ENCODE measurements at regions of chr6 and their contacts with region 1.

Region 1: GRCh38 chr6:107716688-107717089 is 107.4 kb downstream of the SCML4 start:
- DNase-seq: peak; percentile 84
- ATAC-seq: peak; percentile 62
- H3K4me3 Mint-ChIP-seq: peak overlapping the region; percentile 53
- H3K27ac Mint-ChIP-seq: peak overlapping the region; percentile 90
- H3K4me1 Mint-ChIP-seq: peaks cover 72% of the 10 kb centered on the region
- H3K27me3 Mint-ChIP-seq: no peaks in the 10 kb centered on the region

Region 2: DNA sequence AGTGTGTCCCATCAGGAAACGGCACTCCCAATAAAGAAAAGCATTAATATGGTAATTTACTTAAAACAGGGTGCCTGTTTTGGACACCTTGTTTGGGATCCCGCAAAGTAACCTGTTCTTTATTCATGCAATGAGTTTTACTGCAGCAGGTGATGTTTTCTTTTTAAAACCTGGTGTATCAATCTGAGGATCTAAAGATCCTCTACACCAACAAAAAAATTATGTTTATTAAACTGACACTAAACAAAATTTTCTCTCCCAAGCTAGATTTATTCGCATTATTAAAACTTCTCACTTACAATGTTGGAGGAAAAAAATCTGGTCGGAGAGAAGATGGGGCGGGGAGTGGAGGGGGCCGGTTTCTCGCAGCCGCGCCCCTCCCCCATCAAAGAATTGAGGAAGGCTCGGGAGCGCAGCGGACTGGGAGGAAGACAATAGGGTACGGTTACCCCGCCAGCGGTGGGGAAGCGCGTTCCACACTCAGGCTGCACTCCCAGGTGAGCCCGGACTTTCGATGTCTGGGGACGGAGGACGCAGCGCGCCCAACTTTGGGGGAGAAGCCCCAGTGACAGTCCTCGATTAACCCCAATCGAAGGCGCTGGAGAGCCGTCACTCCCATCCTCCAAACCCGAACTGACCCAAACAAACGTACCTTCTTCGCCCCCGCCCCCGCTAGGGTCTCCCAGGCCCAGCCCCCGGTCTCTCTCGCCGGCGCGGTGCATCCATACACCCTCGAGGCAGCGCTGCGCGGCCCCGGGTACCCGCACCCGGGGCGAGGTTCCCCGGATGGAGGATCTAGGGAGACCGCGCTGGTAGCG is 743.5 kb before region 1 on chr6:
- CTCF ChIA-PET with region 1: no interaction called
- POLR2A ChIA-PET with region 1: no interaction called
- intact Hi-C with region 1: no loop called
- DNase-seq: peak; percentile 30
- ATAC-seq: no peak
- H3K4me3 Mint-ChIP-seq: peak overlapping the region; percentile 44
- H3K27ac Mint-ChIP-seq: no peak overlapping the region
- H3K4me1 Mint-ChIP-seq: peaks cover 11% of the 10 kb centered on the region
- H3K27me3 Mint-ChIP-seq: peaks cover 50% of the 10 kb centered on the region

Region 3: DNA sequence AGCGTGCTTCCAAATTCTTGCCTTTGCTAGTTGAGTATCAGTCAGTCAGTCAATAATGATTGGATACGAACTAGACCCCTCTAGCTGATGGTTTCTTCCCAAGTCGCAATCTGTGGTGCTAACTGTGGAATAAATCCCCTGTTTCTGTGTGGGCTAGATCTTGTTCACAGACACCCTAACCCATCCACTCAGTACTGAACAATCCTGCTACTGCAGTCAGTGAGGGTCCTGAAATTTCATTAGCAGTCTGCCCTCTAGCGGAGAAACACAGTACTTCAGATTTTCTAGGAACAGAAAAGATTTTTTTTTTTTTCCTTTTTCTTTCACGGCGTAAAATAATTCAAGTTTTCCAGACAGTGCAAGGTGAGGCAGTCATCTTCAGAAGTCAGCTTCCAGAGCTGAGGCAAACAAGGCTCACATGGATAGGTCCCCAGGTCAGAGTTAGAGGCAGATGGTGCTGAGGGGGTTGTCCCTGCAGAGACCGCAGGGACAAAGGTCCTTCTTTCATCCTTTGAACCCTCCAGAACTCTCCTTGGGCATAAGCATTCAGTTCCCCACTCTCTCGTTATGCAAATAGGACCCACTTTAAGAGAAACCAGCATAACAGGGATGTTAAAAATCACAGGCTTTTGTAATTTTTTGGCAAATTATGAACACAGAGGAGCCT is 12.2 kb before region 1 on chr6:
- CTCF ChIA-PET with region 1: interaction called, 12 read pairs
- POLR2A ChIA-PET with region 1: no interaction called
- intact Hi-C with region 1: no loop called
- DNase-seq: peak; percentile 28
- ATAC-seq: no peak
- H3K4me3 Mint-ChIP-seq: no peak overlapping the region
- H3K27ac Mint-ChIP-seq: no peak overlapping the region
- H3K4me1 Mint-ChIP-seq: peaks cover 26% of the 10 kb centered on the region
- H3K27me3 Mint-ChIP-seq: no peaks in the 10 kb centered on the region

Region 4: GRCh38 chr6:107786709-107787588 is 70.3 kb after region 1 on chr6:
- CTCF ChIA-PET with region 1: interaction called, 3 read pairs
- POLR2A ChIA-PET with region 1: interaction called, 4 read pairs
- intact Hi-C with region 1: loop called in 1 of 2 experiments (anchors 5 kb)
- DNase-seq: peak; percentile 55
- ATAC-seq: peak; percentile 69
- H3K4me3 Mint-ChIP-seq: peak overlapping the region; percentile 27
- H3K27ac Mint-ChIP-seq: peak overlapping the region; percentile 73
- H3K4me1 Mint-ChIP-seq: peaks cover 84% of the 10 kb centered on the region
- H3K27me3 Mint-ChIP-seq: no peaks in the 10 kb centered on the region

Region 5: DNA sequence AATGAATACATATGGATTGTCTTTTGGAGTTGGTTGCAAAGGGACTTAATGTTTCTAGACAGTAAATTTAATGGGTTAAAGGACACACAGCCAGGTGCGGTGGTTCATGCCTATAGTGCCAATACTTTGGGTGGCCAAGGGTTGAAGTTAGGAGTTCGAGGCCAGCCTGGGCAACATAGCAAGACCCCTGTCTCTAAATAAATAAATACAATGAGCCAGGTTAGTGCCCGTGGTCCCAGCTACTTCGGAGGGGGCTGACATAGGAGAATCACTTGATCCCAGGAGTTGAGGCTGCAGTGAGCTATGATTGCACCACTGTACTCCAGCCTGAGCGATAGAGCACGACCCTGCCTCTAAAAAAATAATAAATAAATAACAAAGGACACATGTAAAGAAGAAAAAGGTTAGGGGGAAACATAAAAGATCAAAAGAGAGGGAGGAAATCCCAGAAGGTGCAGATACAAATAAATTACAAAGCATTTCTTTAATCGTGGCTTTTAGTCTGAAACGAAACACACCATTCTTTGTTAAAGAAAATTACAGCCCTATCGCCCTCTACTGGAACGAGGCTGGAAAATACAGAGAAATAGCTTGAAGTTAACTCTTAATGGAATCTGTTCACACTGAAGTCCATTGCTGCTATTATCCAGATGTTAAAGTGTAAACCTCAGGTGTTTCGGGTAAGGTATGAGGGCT is 150.1 kb after region 1 on chr6:
- CTCF ChIA-PET with region 1: interaction called, 11 read pairs
- POLR2A ChIA-PET with region 1: no interaction called
- intact Hi-C with region 1: no loop called
- DNase-seq: peak; percentile 38
- ATAC-seq: peak; percentile 43
- H3K4me3 Mint-ChIP-seq: no peak overlapping the region
- H3K27ac Mint-ChIP-seq: no peak overlapping the region
- H3K4me1 Mint-ChIP-seq: peaks cover 30% of the 10 kb centered on the region
- H3K27me3 Mint-ChIP-seq: no peaks in the 10 kb centered on the region

Region 6: GRCh38 chr6:108068618-108069017 is 351.9 kb after region 1 on chr6:
- CTCF ChIA-PET with region 1: no interaction called
- POLR2A ChIA-PET with region 1: no interaction called
- intact Hi-C with region 1: loop called in 1 of 2 experiments (anchors 5 kb)
- DNase-seq: peak; percentile 68
- ATAC-seq: peak; percentile 95
- H3K4me3 Mint-ChIP-seq: no peak overlapping the region
- H3K27ac Mint-ChIP-seq: no peak overlapping the region
- H3K4me1 Mint-ChIP-seq: peaks cover 12% of the 10 kb centered on the region
- H3K27me3 Mint-ChIP-seq: no peaks in the 10 kb centered on the region

Measured in activated CD4-positive, alpha-beta T cell treated with anti-CD3 and anti-CD28 coated beads for 36 hours (primary cell).